ENCODE measurements at regions of chr3 and their contacts with region 1.

Region 1: DNA sequence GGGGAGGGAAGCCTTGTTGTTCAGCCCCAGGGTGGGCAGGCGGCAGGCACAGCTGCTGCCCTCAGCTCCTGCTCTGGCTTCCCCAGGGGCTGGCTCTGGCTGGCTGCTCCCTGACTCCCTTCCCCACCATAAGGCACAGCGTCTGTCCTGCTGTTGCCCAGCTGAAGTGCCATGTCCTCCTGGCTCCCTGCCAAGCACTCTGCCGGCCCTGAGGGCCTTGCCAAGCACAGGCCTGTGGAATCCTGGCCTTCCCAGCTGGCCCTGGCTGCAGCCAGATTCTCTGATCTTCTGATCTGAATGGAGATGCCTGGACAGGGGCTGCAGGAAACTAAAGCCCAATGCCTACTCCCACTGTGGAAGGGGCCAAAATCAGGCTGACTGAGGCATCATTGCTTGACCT is 1.1 kb downstream of the IQCF6 start:
- DNase-seq: no peak
- H3K4me3 ChIP-seq: no peak overlapping the region
- CTCF ChIP-seq: no peak

Region 2: GRCh38 chr3:51710641-51711351 is 67.2 kb before region 1 on chr3:
- in situ Hi-C with region 1: no loop called
- DNase-seq: no peak
- H3K4me3 ChIP-seq: no peak overlapping the region
- CTCF ChIP-seq: no peak

Region 3: GRCh38 chr3:51729042-51729633 is 48.8 kb before region 1 on chr3:
- in situ Hi-C with region 1: loop called (anchors 5 kb)
- DNase-seq: no peak
- H3K4me3 ChIP-seq: no peak overlapping the region
- CTCF ChIP-seq: no peak

Measured in astrocyte of the cerebellum (primary cell).